ENCODE measurements at regions of chr1 and their contacts with region 1.

Region 1: GRCh38 chr1:30911046-30911954 is 2.7 kb upstream of the SDC3 start:
- DNase-seq: peak; percentile 73

Region 2: GRCh38 chr1:30823969-30824735 is 87.1 kb before region 1 on chr1:
- in situ Hi-C with region 1: loop called (anchors 25 kb)
- DNase-seq: peak; percentile 97

Measured in ACHN (cell line).